ENCODE measurements at regions of chr17 and their contacts with region 1.

Region 1: DNA sequence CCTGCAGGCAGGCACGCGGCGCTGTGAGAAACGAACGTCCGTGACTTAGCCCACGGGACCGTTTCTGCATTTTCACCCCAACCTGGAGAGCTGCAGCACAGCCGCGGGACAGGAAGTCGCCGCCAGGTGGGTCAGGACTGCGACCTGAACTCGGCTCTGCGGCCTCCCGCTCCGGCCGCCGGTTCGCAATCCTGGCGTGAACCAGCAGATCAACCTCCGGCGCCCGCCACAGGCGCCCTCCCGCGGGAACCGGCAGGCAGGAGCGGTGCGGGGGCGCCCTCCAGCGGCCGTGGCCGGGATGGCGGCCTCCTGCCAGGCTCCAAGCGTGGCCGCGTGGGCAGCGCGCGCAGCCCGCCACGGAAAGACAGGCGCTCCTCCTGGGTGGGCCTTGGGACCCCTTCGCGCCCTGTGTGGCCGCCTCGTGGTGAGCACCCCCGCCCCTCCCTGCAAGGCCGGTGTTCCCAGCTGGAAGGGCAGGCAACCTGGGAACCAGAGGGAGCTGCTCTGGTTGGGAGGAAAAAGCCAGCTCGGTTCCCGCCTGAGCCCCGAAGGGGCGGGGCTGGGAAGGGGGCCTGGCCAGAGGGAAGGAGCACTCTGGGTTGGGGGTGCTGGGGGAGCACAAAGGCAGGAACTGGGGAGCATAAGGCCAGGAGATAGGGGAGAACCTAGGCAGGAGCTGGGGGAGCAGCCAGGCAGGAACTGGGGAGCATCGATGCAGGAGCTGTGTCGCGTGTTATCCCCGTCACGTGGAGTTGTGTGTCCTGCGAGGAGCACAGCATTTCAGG is 28.2 kb downstream of the ACTG1 start:
- DNase-seq: peak; percentile 93 to 96
- H3K4me3 ChIP-seq: peak overlapping the region; percentile 65
- H3K4me3 Mint-ChIP-seq: peak overlapping the region; percentile 60
- H3K27ac Mint-ChIP-seq: no peak overlapping the region
- H3K4me1 ChIP-seq: peaks cover 18% of the 10 kb centered on the region
- H3K4me1 Mint-ChIP-seq: no peaks in the 10 kb centered on the region
- H3K27me3 ChIP-seq: no peaks in the 10 kb centered on the region
- H3K27me3 Mint-ChIP-seq: no peaks in the 10 kb centered on the region
- CTCF ChIP-seq: peak; percentile 62 to 99

Region 2: DNA sequence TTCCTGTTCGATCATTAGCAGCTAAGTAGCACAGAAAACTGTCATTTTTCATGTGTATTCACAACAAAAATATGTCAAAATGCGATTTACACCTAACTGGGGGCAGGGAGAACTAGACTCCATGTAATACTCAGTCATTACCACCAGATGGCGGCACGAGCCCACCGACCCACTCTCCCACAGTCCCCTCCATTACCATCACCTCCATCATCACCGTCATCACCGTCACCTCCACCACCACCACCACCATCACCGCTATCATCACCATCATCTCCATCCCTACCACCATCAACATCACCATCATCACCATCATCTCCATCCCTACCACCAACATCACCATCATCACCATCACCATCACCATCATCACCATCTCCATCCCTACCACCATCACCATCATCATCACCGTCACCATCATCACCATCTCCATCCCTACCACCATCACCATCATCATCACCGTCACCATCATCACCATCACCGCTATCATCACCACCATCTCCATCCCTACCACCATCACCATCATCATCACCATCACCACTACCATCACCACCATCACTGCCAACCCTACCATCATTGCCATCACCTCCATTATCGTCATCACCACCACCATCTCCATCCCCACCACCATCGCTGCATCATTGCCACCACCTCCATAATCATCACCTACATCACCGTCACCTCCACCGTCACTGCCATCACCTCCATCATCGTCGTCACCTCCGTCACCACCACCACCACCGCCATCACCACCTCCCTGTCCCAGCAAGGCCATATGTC is 230.8 kb before region 1 on chr17:
- CTCF ChIA-PET with region 1: interaction called, 28 read pairs
- POLR2A ChIA-PET with region 1: no interaction called
- intact Hi-C with region 1: loop called (anchors 1 kb)
- DNase-seq: peak in 1 of 2 experiments; percentile 66
- H3K4me3 ChIP-seq: no peak overlapping the region
- H3K4me3 Mint-ChIP-seq: no peak overlapping the region
- H3K27ac Mint-ChIP-seq: no peak overlapping the region
- H3K4me1 ChIP-seq: no peaks in the 10 kb centered on the region
- H3K4me1 Mint-ChIP-seq: no peaks in the 10 kb centered on the region
- H3K27me3 ChIP-seq: no peaks in the 10 kb centered on the region
- H3K27me3 Mint-ChIP-seq: no peaks in the 10 kb centered on the region
- CTCF ChIP-seq: peak; percentile 64 to 94

Region 3: DNA sequence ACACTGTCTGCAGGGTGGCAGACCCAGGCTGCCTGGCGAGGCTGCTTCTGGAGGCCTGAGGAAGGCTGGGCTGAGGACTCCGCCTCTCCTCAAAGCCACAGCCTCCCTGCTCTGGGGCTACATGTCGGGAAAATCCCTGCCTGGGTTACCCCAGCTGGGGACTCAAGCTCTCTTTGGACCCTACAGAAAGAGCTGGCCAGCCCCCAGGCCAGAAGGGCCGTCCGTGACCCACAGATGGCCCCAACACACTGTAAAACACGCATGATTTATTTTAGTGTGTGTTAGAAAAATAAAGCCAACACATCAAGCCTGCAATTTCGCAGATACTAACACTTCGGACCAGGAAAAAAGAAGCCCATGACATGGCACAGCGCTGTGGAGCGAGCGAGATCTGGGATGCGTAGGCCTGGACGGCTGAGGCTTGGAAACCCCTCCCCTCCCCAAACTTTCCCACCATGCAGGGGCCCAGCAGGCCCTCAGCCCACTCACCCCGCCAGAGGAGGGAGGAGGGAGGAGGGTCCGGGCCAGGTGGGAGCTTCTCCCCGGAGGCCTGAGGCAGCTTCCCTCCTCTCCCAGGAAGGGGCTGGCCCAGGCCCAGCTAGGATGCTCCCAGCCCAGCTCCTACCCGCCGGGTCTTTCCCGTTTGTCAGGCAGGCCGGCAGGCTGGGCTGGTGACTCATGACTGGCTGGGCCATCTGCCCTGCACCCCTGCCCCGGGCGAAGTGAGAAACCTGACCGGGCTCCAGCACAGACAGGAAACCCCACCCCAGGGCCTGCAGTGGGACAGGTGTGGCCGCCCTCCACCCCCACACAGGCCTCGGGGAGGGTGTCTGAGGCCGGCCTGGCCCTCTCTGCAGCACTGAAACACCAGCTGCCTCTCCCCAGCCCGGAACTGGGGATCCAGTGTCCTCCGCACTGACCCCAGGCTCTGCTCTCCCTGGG is 155.1 kb before region 1 on chr17:
- CTCF ChIA-PET with region 1: interaction called, 12 read pairs
- POLR2A ChIA-PET with region 1: no interaction called
- intact Hi-C with region 1: no loop called
- DNase-seq: peak; percentile 98
- H3K4me3 ChIP-seq: peak overlapping the region; percentile 29
- H3K4me3 Mint-ChIP-seq: peak overlapping the region; percentile 74
- H3K27ac Mint-ChIP-seq: peak overlapping the region; percentile 95
- H3K4me1 ChIP-seq: peaks cover 54% of the 10 kb centered on the region
- H3K4me1 Mint-ChIP-seq: peaks cover 27% of the 10 kb centered on the region
- H3K27me3 ChIP-seq: no peaks in the 10 kb centered on the region
- H3K27me3 Mint-ChIP-seq: no peaks in the 10 kb centered on the region
- CTCF ChIP-seq: no peak

Region 4: GRCh38 chr17:81440876-81441244 is 43.5 kb before region 1 on chr17:
- CTCF ChIA-PET with region 1: interaction called, 17 read pairs
- POLR2A ChIA-PET with region 1: interaction called, 5 read pairs
- intact Hi-C with region 1: loop called (anchors 2 kb)
- DNase-seq: peak; percentile 65 to 84
- H3K4me3 ChIP-seq: no peak overlapping the region
- H3K4me3 Mint-ChIP-seq: no peak overlapping the region
- H3K27ac Mint-ChIP-seq: no peak overlapping the region
- H3K4me1 ChIP-seq: peaks cover 4% of the 10 kb centered on the region
- H3K4me1 Mint-ChIP-seq: no peaks in the 10 kb centered on the region
- H3K27me3 ChIP-seq: no peaks in the 10 kb centered on the region
- H3K27me3 Mint-ChIP-seq: no peaks in the 10 kb centered on the region
- CTCF ChIP-seq: peak; percentile 82 to 91

Measured in Caco-2 (cell line).